ENCODE measurements at regions of chr15 and their contacts with region 1.

Region 1: DNA sequence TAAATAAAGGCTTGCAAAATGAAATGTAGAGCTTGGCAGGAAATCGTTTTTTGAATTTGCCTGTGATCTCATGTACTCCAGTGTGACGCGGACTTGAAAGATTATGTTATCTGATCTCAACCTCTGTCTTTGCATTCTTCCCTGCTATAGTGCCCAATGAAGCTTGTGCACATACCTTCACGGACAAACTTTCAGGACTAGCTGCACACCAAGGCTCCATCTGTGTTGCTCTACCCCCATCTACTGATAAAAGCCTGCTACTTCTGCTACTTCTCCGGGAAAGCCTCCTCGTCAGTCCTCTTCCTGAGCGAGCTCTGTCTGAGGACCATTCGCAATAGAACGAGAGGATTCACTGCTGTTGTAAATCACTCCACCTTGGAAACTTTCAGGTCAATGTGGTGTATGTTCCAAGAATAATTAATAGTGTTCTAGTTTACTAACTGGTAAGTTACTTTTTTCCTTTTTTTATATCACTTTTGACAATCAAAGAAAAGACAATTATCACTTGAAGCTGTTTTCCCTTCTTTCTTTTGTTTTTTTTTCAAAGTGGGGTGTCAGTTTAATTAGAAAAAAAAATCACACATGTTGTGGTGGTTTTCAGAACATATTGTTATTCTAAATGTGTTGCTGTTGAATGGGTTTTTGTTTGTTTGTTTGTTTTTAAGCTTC is 217.6 kb downstream of the ARRDC4 start:
- DNase-seq: peak; percentile 65
- H3K4me3 ChIP-seq: no peak overlapping the region
- H3K27ac ChIP-seq: no peak overlapping the region
- H3K4me1 ChIP-seq: no peaks in the 10 kb centered on the region
- H3K27me3 ChIP-seq: no peaks in the 10 kb centered on the region
- CTCF ChIP-seq: peak; percentile 18 to 56 (median 55)
- POLR2A ChIP-seq: no peak

Region 2: GRCh38 chr15:97909291-97909891 is 268.7 kb before region 1 on chr15:
- intact Hi-C with region 1: loop called (anchors 10 kb)
- DNase-seq: peak; percentile 75
- H3K4me3 ChIP-seq: no peak overlapping the region
- H3K27ac ChIP-seq: no peak overlapping the region
- H3K4me1 ChIP-seq: no peaks in the 10 kb centered on the region
- H3K27me3 ChIP-seq: no peaks in the 10 kb centered on the region
- CTCF ChIP-seq: peak; percentile 50 to 76 (median 66)
- POLR2A ChIP-seq: no peak